ENCODE measurements at regions of chr9 and their contacts with region 1.

Region 1: DNA sequence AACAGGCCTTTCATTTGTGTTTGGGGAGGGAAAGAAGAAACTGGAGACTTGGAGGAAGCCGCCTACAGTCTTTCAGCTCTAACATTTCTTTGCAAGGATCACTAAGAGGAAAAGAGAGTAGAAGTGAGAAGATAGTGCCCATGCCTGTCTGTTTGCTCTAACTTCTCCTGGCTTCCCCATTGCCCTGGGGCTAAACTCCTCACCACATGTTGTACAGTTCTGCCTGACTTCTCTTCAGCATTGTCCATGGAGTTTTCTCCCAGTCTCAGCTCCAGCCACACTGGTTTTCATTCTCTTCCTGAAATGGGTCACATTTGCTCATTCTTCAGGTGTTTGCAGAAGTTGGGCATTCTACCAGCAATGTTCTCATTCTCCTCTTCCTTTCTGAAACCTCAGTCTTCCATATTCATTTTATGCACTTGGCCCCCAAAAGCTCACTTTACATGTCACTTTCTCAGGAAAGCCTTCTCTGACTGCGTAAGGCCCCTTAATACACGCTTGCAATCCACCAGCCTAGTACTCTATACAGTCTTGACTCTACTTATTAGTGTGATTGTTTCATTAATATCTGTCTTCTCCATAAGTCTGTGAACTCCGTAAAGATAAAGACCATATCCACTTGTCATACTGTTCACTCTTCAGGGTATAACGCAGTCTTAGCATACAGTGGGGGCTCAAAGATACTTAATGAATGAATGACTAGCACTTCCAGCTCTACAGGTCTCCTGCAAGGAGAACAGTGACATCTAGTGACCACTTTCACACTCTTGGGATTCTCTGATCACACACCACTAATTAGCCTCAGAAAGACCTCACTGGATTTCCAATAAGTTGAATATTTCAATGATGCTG is 40.2 kb upstream of the TRIM32 start:
- DNase-seq: peak in 3 of 4 experiments; percentile 9 to 40 (median 18)
- ATAC-seq: peak; percentile 88
- H3K4me3 ChIP-seq: no peak overlapping the region
- H3K27ac ChIP-seq: no peak overlapping the region
- H3K4me1 ChIP-seq: no peaks in the 10 kb centered on the region
- H3K27me3 ChIP-seq: no peaks in the 10 kb centered on the region
- CTCF ChIP-seq: peak; percentile 47 to 68 (median 58)
- EP300 ChIP-seq: no peak
- POLR2A ChIP-seq: no peak
- RAD21 ChIP-seq: peak; percentile 72 to 74

Region 2: GRCh38 chr9:116058456-116058855 is 588.4 kb before region 1 on chr9:
- CTCF ChIA-PET with region 1: no interaction called
- POLR2A ChIA-PET with region 1: no interaction called
- in situ Hi-C with region 1: no loop called
- intact Hi-C with region 1: no loop called
- DNase-seq: no peak
- ATAC-seq: no peak
- H3K4me3 ChIP-seq: no peak overlapping the region
- H3K27ac ChIP-seq: no peak overlapping the region
- H3K4me1 ChIP-seq: no peaks in the 10 kb centered on the region
- H3K27me3 ChIP-seq: no peaks in the 10 kb centered on the region
- CTCF ChIP-seq: no peak
- EP300 ChIP-seq: no peak
- POLR2A ChIP-seq: no peak
- RAD21 ChIP-seq: no peak

Region 3: DNA sequence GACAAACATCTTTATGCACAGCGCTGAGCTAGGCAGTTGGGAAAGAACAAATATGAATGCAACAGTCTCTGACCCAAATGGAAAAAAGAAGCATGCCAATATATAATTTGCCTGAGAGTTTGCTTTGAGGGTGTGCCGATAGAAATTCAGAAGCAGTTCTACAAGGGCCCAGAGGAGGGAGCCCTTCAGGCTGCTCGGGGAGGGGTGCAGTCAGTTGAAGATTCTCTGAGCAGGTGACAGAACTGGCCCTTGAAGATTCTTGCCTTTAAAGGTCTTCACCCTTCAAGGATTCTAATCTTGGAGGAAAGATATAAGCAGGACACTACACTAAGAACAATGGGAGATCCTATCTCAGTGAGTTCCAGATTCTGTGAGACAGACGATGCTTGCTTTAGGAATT is 497.0 kb before region 1 on chr9:
- CTCF ChIA-PET with region 1: interaction called, 3 read pairs
- POLR2A ChIA-PET with region 1: no interaction called
- in situ Hi-C with region 1: no loop called
- intact Hi-C with region 1: loop called (anchors 5 kb)
- DNase-seq: peak; percentile 32 to 51 (median 40)
- ATAC-seq: peak; percentile 88
- H3K4me3 ChIP-seq: no peak overlapping the region
- H3K27ac ChIP-seq: no peak overlapping the region
- H3K4me1 ChIP-seq: peaks cover 0 to 6% of the 10 kb centered on the region in 2 experiments; a peak in 1 of 5 replicates
- H3K27me3 ChIP-seq: peaks cover 3 to 5% of the 10 kb centered on the region in 2 experiments; a peak in 3 of 5 replicates
- CTCF ChIP-seq: peak; percentile 70 to 81 (median 71)
- EP300 ChIP-seq: no peak
- POLR2A ChIP-seq: no peak
- RAD21 ChIP-seq: peak; percentile 60 to 64

Region 4: GRCh38 chr9:116687074-116687753 is 40.3 kb after region 1 on chr9 and contains the start of gene TRIM32:
- CTCF ChIA-PET with region 1: no interaction called
- POLR2A ChIA-PET with region 1: no interaction called
- in situ Hi-C with region 1: no loop called
- intact Hi-C with region 1: no loop called
- DNase-seq: peak; percentile 95 to 98 (median 96)
- ATAC-seq: peak; percentile 98
- H3K4me3 ChIP-seq: peak within 1 kb of the TSS; percentile 58
- H3K27ac ChIP-seq: no peak within 1 kb of the TSS; the same call in 1 of the 3 replicates
- H3K4me1 ChIP-seq: peaks cover 16 to 30% of the 10 kb centered on the region in 2 experiments; a peak in 4 of 5 replicates
- H3K27me3 ChIP-seq: no peaks in the 10 kb centered on the region
- CTCF ChIP-seq: no peak
- EP300 ChIP-seq: no peak
- POLR2A ChIP-seq: peak; percentile 62
- RAD21 ChIP-seq: no peak
- polyA plus RNA-seq, gene TRIM32: 7.6 to 9.3 TPM

Region 5: GRCh38 chr9:116842658-116843057 is 195.8 kb after region 1 on chr9:
- CTCF ChIA-PET with region 1: no interaction called
- POLR2A ChIA-PET with region 1: no interaction called
- in situ Hi-C with region 1: no loop called
- intact Hi-C with region 1: no loop called
- DNase-seq: peak in 2 of 4 experiments; percentile 11
- ATAC-seq: peak; percentile 52; the same call in 1 of the 3 replicates
- H3K4me3 ChIP-seq: no peak overlapping the region
- H3K27ac ChIP-seq: no peak overlapping the region
- H3K4me1 ChIP-seq: no peaks in the 10 kb centered on the region
- H3K27me3 ChIP-seq: no peaks in the 10 kb centered on the region
- CTCF ChIP-seq: no peak
- EP300 ChIP-seq: no peak
- POLR2A ChIP-seq: no peak
- RAD21 ChIP-seq: no peak

Measured in K562 (cell line).